B cell (primary cell): ENCODE measurements at regions of chr2 and their contacts with region 1.

Region 1: GRCh38 chr2:169824373-169825333 is at the start of gene METTL5:
- DNase-seq: peak; percentile 86
- ATAC-seq: peak; percentile 74
- H3K4me3 ChIP-seq: peak within 1 kb of the TSS; percentile 64 to 90 (median 68)
- H3K4me3 Mint-ChIP-seq: peak within 1 kb of the TSS; percentile 90
- H3K27ac ChIP-seq: peak within 1 kb of the TSS in 1 of 2 donors; percentile 73
- H3K27ac Mint-ChIP-seq: peak within 1 kb of the TSS; percentile 90
- H3K4me1 ChIP-seq: peaks cover 28 to 34% of the 10 kb centered on the region in 2 donors
- H3K4me1 Mint-ChIP-seq: peaks cover 47% of the 10 kb centered on the region
- H3K27me3 ChIP-seq: no peaks in the 10 kb centered on the region
- H3K27me3 Mint-ChIP-seq: no peaks in the 10 kb centered on the region
- CTCF ChIP-seq: peak; percentile 94
- total RNA-seq, gene METTL5: 36.4 and 37.0 TPM in 2 replicates

Region 2: GRCh38 chr2:169528271-169528701 is 296.4 kb before region 1 on chr2:
- CTCF ChIA-PET with region 1: no interaction called
- POLR2A ChIA-PET with region 1: no interaction called
- intact Hi-C with region 1: no loop called
- DNase-seq: peak; percentile 78
- ATAC-seq: peak; percentile 78
- H3K4me3 ChIP-seq: no peak overlapping the region
- H3K4me3 Mint-ChIP-seq: no peak overlapping the region
- H3K27ac ChIP-seq: peak overlapping the region in 1 of 2 donors; percentile 23
- H3K27ac Mint-ChIP-seq: no peak overlapping the region
- H3K4me1 ChIP-seq: no peaks in the 10 kb centered on the region
- H3K4me1 Mint-ChIP-seq: no peaks in the 10 kb centered on the region
- H3K27me3 ChIP-seq: no peaks in the 10 kb centered on the region
- H3K27me3 Mint-ChIP-seq: no peaks in the 10 kb centered on the region
- CTCF ChIP-seq: peak; percentile 87

Region 3: GRCh38 chr2:169637620-169638019 is 187.0 kb before region 1 on chr2:
- CTCF ChIA-PET with region 1: no interaction called
- POLR2A ChIA-PET with region 1: no interaction called
- intact Hi-C with region 1: no loop called
- DNase-seq: no peak
- ATAC-seq: no peak
- H3K4me3 ChIP-seq: no peak overlapping the region
- H3K4me3 Mint-ChIP-seq: no peak overlapping the region
- H3K27ac ChIP-seq: no peak overlapping the region
- H3K27ac Mint-ChIP-seq: no peak overlapping the region
- H3K4me1 ChIP-seq: no peaks in the 10 kb centered on the region
- H3K4me1 Mint-ChIP-seq: no peaks in the 10 kb centered on the region
- H3K27me3 ChIP-seq: no peaks in the 10 kb centered on the region
- H3K27me3 Mint-ChIP-seq: no peaks in the 10 kb centered on the region
- CTCF ChIP-seq: no peak

Region 4: GRCh38 chr2:169798718-169799592 is 25.7 kb before region 1 on chr2 and contains the start of gene SSB:
- CTCF ChIA-PET with region 1: interaction called, 5 read pairs
- POLR2A ChIA-PET with region 1: interaction called, 6 read pairs
- intact Hi-C with region 1: loop called (anchors 1 kb)
- DNase-seq: peak; percentile 96
- ATAC-seq: peak; percentile 96
- H3K4me3 ChIP-seq: peak within 1 kb of the TSS; percentile 60 to 91 (median 84)
- H3K4me3 Mint-ChIP-seq: peak within 1 kb of the TSS; percentile 95
- H3K27ac ChIP-seq: peak within 1 kb of the TSS; percentile 86 to 95
- H3K27ac Mint-ChIP-seq: peak within 1 kb of the TSS; percentile 88
- H3K4me1 ChIP-seq: peaks cover 10 to 15% of the 10 kb centered on the region in 2 donors
- H3K4me1 Mint-ChIP-seq: peaks cover 25% of the 10 kb centered on the region
- H3K27me3 ChIP-seq: no peaks in the 10 kb centered on the region
- H3K27me3 Mint-ChIP-seq: no peaks in the 10 kb centered on the region
- CTCF ChIP-seq: no peak
- total RNA-seq, gene SSB: 76.2 and 81.3 TPM in 2 replicates

Region 5: GRCh38 chr2:169933124-169933711 is 108.6 kb after region 1 on chr2:
- CTCF ChIA-PET with region 1: interaction called, 9 read pairs
- POLR2A ChIA-PET with region 1: no interaction called
- intact Hi-C with region 1: loop called (anchors 1 kb)
- DNase-seq: peak; percentile 19
- ATAC-seq: peak; percentile 28
- H3K4me3 ChIP-seq: no peak overlapping the region
- H3K4me3 Mint-ChIP-seq: no peak overlapping the region
- H3K27ac ChIP-seq: no peak overlapping the region
- H3K27ac Mint-ChIP-seq: no peak overlapping the region
- H3K4me1 ChIP-seq: no peaks in the 10 kb centered on the region
- H3K4me1 Mint-ChIP-seq: no peaks in the 10 kb centered on the region
- H3K27me3 ChIP-seq: no peaks in the 10 kb centered on the region
- H3K27me3 Mint-ChIP-seq: no peaks in the 10 kb centered on the region
- CTCF ChIP-seq: peak; percentile 75